HEK293 (cell line): ENCODE measurements at regions of chr2 and their contacts with region 1.

Region 1: DNA sequence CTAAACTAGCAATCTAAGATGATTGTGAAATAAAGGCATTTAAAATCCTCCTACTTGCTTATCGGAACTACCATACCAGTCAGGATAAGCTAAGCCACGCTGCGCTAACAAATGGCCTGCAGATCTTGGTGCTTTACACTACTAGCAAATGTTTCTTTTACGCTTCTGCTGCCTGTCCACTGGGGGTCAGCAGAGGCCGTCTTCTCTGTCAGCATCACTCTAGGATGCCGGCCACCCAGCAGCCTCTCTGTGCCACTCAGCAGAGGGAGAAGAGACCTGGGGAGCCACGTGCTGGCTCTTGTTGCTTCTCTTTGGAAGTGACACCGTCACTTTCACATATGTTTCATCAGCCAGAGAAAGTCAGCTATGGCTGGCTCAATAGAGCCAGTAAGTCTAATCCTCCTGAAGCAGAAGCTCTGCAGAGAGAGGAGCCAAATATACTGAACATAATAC is 36.6 kb downstream of the COPS8 start:
- H3K4me3 ChIP-seq: no peak overlapping the region
- H3K27ac ChIP-seq: no peak overlapping the region
- H3K4me1 ChIP-seq: no peaks in the 10 kb centered on the region
- CTCF ChIP-seq: peak; percentile 36; the same call in 1 of the 2 replicates

Region 2: DNA sequence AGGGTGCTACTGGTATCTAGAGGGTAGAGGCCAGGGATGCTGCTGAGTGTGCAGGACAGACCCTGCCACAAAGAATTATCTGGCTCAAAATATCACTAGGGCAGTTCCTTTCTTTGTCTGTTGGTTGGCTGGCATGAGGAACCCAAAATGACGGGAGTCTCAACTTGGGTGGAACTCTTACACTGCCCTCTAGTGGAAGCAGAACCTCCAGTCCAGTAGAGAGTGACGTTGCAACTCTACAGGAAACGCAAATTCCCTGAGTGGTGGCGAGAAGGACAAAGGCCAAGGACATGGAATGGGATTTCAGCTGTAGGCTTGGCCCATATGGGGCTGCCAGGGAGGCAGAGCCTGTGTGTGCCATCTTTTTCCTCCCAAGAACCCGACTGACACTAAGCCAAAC is 10.6 kb after region 1 on chr2:
- CTCF ChIA-PET with region 1: interaction called, 13 read pairs
- POLR2A ChIA-PET with region 1: no interaction called
- H3K4me3 ChIP-seq: no peak overlapping the region
- H3K27ac ChIP-seq: no peak overlapping the region
- H3K4me1 ChIP-seq: peaks cover 2% of the 10 kb centered on the region; the same call in 1 of the 2 replicates
- CTCF ChIP-seq: no peak

Region 3: GRCh38 chr2:237540823-237541222 is 418.6 kb after region 1 on chr2:
- CTCF ChIA-PET with region 1: no interaction called
- POLR2A ChIA-PET with region 1: no interaction called
- H3K4me3 ChIP-seq: no peak overlapping the region
- H3K27ac ChIP-seq: no peak overlapping the region
- H3K4me1 ChIP-seq: no peaks in the 10 kb centered on the region
- CTCF ChIP-seq: no peak